Calu3 (cell line): ENCODE measurements at regions of chr9 and their contacts with region 1.

Region 1: DNA sequence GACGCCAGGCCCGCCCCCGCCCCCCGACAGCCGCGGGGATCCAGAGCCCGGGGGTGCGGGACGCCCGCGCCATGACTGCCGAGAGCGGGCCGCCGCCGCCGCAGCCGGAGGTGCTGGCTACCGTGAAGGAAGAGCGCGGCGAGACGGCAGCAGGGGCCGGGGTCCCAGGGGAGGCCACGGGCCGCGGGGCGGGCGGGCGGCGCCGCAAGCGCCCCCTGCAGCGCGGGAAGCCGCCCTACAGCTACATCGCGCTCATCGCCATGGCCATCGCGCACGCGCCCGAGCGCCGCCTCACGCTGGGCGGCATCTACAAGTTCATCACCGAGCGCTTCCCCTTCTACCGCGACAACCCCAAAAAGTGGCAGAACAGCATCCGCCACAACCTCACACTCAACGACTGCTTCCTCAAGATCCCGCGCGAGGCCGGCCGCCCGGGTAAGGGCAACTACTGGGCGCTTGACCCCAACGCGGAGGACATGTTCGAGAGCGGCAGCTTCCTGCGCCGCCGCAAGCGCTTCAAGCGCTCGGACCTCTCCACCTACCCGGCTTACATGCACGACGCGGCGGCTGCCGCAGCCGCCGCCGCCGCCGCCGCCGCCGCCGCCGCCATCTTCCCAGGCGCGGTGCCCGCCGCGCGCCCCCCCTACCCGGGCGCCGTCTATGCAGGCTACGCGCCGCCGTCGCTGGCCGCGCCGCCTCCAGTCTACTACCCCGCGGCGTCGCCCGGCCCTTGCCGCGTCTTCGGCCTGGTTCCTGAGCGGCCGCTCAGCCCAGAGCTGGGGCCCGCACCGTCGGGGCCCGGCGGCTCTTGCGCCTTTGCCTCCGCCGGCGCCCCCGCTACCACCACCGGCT is 1.0 kb downstream of the FOXE1 start:
- DNase-seq: peak; percentile 52
- H3K4me3 Mint-ChIP-seq: peak overlapping the region; percentile 96
- H3K27ac Mint-ChIP-seq: peak overlapping the region; percentile 47
- H3K4me1 Mint-ChIP-seq: no peaks in the 10 kb centered on the region
- H3K27me3 Mint-ChIP-seq: no peaks in the 10 kb centered on the region
- CTCF ChIP-seq: peak; percentile 73

Region 2: GRCh38 chr9:97803167-97804058 is 50.7 kb before region 1 on chr9:
- CTCF ChIA-PET with region 1: no interaction called
- intact Hi-C with region 1: loop called (anchors 2 kb)
- DNase-seq: peak; percentile 74
- H3K4me3 Mint-ChIP-seq: peak overlapping the region; percentile 61
- H3K27ac Mint-ChIP-seq: peak overlapping the region; percentile 83
- H3K4me1 Mint-ChIP-seq: peaks cover 21% of the 10 kb centered on the region
- H3K27me3 Mint-ChIP-seq: no peaks in the 10 kb centered on the region
- CTCF ChIP-seq: peak; percentile 13